Esophagus muscularis mucosa (tissue), 4 donors: ENCODE measurements at regions of chr1 and their contacts with region 1.

Region 1: GRCh38 chr1:115807723-115808122 is 33.2 kb downstream of the NHLH2 start:
- DNase-seq: no peak
- H3K4me3 ChIP-seq: no peak overlapping the region
- H3K27ac ChIP-seq: no peak overlapping the region
- H3K4me1 ChIP-seq: peaks cover 0 to 5% (median 0%) of the 10 kb centered on the region in 4 donors
- H3K27me3 ChIP-seq: no peaks in the 10 kb centered on the region
- CTCF ChIP-seq: peak; percentile 49 to 57 (median 51)
- EP300 ChIP-seq: no peak
- POLR2A ChIP-seq: no peak

Region 2: GRCh38 chr1:115890580-115890979 is 82.9 kb after region 1 on chr1:
- intact Hi-C with region 1: no loop called
- DNase-seq: peak; percentile 31
- H3K4me3 ChIP-seq: no peak overlapping the region
- H3K27ac ChIP-seq: no peak overlapping the region
- H3K4me1 ChIP-seq: no peaks in the 10 kb centered on the region
- H3K27me3 ChIP-seq: no peaks in the 10 kb centered on the region
- CTCF ChIP-seq: no peak
- EP300 ChIP-seq: no peak
- POLR2A ChIP-seq: no peak

Region 3: GRCh38 chr1:115916311-115916710 is 108.6 kb after region 1 on chr1:
- intact Hi-C with region 1: no loop called
- DNase-seq: no peak
- H3K4me3 ChIP-seq: no peak overlapping the region
- H3K27ac ChIP-seq: no peak overlapping the region
- H3K4me1 ChIP-seq: no peaks in the 10 kb centered on the region
- H3K27me3 ChIP-seq: no peaks in the 10 kb centered on the region
- CTCF ChIP-seq: no peak
- EP300 ChIP-seq: no peak
- POLR2A ChIP-seq: no peak

Region 4: DNA sequence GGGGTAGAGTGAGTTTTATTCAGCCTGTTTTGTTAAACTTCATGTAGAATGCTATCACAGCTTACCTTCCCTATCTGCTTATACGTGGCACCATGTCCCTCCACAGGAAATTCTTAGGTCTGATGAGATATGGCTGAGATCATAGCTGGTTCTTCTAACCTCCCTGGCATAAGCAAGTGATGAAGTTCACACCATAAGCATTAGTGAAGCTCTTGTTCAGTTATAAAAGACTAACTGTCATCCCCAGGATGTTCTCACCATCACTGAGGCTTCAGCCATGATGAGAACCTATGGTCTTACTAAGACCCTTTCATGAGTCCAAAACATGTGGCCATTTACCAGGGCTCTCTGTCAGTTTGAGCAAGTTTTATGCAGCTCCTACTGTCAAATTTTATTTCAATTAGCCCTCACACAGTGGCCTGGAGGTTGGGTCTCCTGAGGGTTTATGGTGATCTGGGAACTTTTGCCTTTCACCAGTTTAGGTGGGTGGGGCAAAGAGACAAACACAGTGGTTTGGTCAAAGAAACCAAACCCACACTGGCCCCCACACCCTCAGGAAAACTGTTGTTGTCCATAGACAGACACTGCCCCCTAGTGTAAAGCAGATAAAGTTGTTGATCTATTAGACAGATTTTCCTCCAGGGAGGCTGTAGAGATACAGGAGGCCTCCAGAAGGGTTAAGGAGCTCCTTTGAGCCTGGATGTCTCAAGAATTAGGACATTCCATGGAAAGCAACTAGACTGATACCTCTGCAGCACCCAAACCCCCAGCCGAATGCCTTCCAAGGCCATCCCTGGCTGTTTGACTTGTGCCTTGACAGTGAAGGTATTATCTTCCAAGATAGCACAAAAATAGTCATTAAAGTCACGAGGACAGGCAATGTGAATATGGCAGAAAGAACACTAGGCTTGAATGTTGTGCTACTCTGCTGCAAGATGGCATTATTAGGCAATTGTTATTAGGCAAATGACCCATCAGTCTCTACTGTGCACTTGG is 173.6 kb after region 1 on chr1:
- intact Hi-C with region 1: loop called (anchors 2 kb)
- DNase-seq: no peak
- H3K4me3 ChIP-seq: no peak overlapping the region
- H3K27ac ChIP-seq: no peak overlapping the region
- H3K4me1 ChIP-seq: peaks cover 6 to 13% (median 8%) of the 10 kb centered on the region in 4 donors
- H3K27me3 ChIP-seq: peaks cover 0 to 9% (median 2%) of the 10 kb centered on the region in 4 donors
- CTCF ChIP-seq: peak; percentile 44 to 53 (median 48)
- EP300 ChIP-seq: no peak
- POLR2A ChIP-seq: no peak